ENCODE measurements at regions of chr11 and their contacts with region 1.

Region 1: DNA sequence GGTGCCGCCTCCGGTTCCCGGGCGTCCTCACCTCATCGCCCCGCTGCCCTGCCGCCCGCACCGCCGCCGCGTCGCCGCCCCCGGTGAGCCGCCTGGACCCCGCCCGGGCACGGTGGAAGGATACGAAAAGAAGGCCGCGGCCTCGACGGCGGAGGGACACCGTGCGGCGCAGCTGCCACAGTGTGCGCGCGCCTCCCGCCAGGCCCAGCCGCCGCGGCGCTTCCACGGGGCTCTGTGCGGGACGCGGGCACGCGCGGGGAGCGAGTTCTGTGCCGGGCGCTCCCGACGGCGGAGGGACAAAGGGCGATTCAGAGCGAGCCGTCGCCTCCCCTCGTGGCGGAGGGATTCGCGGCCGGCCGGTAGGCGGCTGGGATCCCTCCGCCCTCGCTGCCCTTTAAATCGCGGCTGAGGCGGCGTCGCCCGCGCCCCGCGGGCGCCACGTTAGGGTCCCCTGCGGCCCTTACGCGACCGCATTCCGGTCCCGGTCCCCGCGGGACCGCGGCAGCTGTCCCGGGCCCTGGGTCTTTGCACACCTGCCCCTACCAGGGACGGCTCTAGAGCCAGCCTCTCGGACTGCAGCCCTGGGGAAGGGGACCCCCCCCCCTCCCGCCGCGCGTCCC is 569 bp upstream of the KMT5B start:
- DNase-seq: peak; percentile 59 to 90 (median 80)
- H3K4me3 ChIP-seq: peak overlapping the region; percentile 59 to 95 (median 86)
- H3K27ac ChIP-seq: peak overlapping the region; percentile 89 to 100 (median 98)
- H3K27me3 ChIP-seq: no peaks in the 10 kb centered on the region
- CTCF ChIP-seq: peak in 27 of 56 donors; percentile 7 to 57 (median 27)

Region 2: GRCh38 chr11:68121067-68121899 is 92.4 kb before region 1 on chr11 and contains the start of gene CHKA:
- intact Hi-C with region 1: loop called (anchors 1 to 2 kb)
- DNase-seq: peak; percentile 86 to 98 (median 92)
- H3K4me3 ChIP-seq: peak within 1 kb of the TSS; percentile 60 to 94 (median 78)
- H3K27ac ChIP-seq: peak within 1 kb of the TSS; percentile 92 to 100 (median 98)
- H3K27me3 ChIP-seq: no peaks in the 10 kb centered on the region
- CTCF ChIP-seq: peak in 19 of 56 donors; percentile 5 to 47 (median 27)
- total RNA-seq, gene CHKA: 56.6 to 150 (median 86.1) TPM

Region 3: DNA sequence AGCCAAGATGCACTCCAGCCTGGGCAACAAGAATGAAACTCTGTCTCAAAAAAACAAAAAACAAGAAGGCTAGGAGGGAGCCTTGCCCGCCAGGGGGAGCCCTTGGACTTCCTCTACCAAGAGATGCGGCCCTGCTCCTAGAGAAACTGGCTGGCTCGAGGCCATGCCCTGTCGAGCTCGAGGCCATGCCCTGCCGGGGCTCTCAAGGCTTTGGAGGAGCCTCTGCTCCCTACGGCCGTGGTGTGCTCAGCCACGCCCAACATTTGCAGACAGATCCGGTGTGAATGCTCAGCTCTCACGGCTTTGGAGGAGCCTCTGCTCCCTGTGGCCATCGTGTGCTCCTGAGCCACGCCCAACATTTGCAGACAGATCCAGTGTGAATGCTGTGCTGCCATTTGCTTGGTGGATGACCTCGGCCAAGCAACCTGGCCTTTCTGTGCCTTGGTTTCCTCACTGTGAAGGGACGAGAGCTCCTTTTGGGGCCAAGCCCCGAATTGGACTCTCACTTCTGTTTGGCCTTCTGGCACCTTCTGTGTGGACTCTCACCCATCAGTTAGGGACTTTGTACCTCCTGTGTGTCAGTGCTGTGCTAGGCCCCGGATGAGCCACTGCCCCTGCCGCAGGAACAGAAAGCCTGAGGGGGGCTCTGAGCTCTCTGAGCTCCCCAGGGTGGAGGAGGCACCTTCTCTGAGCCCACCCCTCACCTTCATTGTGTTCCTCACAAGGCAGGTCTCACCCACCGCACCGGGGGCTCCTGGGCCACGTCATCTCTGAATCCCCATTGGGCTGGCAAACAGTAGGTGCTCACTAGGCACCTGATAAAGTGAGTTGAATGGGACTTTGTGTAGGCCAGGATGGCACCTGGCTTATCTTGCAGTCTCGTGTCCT is 44.1 kb after region 1 on chr11:
- intact Hi-C with region 1: loop called in 1 of 2 experiments (anchors 5 kb)
- DNase-seq: peak; percentile 91 to 99 (median 97)
- H3K4me3 ChIP-seq: peak overlapping the region in 33 of 59 donors; percentile 2 to 57 (median 23)
- H3K27ac ChIP-seq: peak overlapping the region in 50 of 59 donors; percentile 0 to 85 (median 56)
- H3K27me3 ChIP-seq: no peaks in the 10 kb centered on the region
- CTCF ChIP-seq: peak; percentile 81 to 99 (median 93)

Region 4: DNA sequence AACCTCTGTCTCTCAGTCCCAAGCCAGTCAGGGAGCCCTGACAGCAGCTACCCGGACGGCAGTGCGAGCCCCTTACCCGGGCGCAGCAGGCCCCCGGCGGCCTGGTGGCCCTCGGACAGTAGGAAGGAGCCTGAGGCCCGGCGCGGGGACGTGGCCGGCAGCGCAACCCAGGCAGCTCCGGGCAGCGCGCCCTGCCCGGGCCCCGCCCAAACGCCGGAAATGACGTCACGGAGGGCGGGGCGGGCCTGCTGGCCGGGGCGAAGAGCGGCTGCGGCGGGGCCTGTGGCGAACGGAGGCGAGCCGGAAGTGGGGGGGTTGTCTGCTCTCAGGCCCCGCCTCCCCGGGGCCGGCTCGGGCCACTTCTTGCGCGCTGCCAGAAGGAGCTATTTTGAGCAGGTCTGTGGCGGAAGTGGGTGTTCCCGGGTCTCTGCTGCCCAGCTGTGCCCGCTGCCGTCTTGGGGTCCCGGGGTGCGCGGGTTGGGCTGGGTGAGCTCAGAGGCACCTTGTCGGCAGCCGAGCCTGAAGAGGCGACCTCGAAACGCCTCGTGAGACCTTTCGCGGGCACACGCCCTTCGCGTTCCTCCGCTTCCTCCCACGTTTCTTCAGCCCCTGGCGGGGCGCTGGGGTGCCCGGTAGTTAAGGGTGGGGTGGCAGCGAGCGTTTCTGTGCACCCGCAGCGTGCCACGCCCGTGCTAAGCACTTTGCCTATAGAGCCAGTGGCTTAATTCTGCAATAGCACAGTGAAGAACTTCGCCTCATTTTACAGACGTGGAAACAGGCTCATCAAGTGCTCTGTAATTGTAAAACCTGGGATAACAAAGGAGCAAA is 58.3 kb after region 1 on chr11 and contains the start of gene C11orf24:
- intact Hi-C with region 1: loop called (anchors 1 to 2 kb)
- DNase-seq: peak; percentile 88 to 98 (median 94)
- H3K4me3 ChIP-seq: peak within 1 kb of the TSS; percentile 67 to 98 (median 87)
- H3K27ac ChIP-seq: peak within 1 kb of the TSS; percentile 46 to 98 (median 93)
- H3K27me3 ChIP-seq: no peaks in the 10 kb centered on the region
- CTCF ChIP-seq: peak in 25 of 56 donors; percentile 4 to 54 (median 27)
- total RNA-seq, gene C11orf24: 12.6 to 56.0 (median 23.3) TPM

Region 5: DNA sequence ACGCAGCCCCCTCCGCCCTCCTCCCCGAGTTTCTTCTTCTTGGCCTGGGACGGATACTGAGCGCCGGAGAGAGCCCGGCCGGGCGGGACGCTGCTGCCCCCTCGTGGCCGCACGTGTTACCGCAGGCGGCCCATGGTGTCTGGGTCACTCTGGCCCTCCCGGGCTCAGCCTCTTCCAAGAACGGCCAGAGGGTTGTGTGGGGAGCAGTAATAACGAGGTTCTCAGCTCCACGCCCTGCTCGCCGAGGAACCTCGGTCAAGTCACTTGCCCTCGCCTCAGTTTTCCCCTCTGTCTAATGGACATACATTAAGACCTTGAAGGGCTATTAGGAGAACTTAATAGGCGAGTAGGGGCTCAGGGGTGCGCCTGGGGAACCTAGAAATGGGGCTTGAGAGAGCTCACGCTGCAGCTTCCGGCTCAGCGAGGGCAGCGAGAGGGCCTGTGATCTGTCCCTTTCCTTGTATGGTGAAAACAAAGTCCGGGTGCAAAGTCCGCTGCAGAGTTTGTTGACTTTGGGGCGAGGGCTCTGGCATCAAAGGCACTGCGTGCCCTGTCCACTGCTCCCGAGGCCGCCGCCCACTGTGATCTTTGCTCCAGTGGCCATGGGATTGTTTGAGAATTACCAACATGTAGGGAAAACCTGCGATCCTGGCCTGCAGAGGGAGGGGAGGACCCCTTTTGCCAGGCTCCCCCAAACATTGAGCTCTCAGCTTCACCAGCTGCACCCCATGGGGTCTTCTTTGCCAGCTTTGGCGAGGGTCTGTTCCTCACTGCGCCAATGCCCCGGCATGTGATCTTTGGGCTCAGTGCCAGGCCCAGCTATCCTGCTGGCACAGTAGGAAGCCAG is 84.4 kb after region 1 on chr11:
- intact Hi-C with region 1: loop called (anchors 5 kb)
- DNase-seq: peak; percentile 58 to 89 (median 65)
- H3K4me3 ChIP-seq: peak overlapping the region in 36 of 59 donors; percentile 5 to 51 (median 28)
- H3K27ac ChIP-seq: peak overlapping the region in 1 of 59 donors; percentile 13
- H3K27me3 ChIP-seq: no peaks in the 10 kb centered on the region
- CTCF ChIP-seq: peak; percentile 85 to 99 (median 97)

Region 6: DNA sequence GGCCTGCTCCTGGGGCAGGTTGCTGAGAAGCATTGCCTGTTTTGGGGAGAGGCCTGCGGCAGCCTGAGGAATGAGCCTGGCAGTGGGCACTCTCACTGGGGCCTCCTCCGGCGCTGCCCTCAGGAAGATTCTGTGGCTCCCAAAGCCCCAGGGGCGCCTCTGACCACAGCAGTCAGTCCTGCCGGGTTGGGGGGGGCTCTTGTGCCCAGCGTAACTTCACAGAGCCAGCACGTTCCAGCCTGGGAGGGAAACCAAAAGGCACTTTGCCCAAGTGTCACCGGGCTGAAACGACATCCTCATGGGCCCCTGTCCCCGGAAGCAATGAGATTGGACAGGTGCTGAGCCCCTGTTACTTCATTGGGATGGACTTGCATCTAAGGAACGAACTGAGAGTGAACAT is 94.4 kb after region 1 on chr11:
- intact Hi-C with region 1: no loop called
- DNase-seq: no peak
- H3K4me3 ChIP-seq: no peak overlapping the region
- H3K27ac ChIP-seq: peak overlapping the region in 2 of 59 donors; percentile 5 to 8
- H3K27me3 ChIP-seq: peaks cover 0 to under 1% (median 0%) of the 10 kb centered on the region in 45 donors
- CTCF ChIP-seq: no peak

Region 7: DNA sequence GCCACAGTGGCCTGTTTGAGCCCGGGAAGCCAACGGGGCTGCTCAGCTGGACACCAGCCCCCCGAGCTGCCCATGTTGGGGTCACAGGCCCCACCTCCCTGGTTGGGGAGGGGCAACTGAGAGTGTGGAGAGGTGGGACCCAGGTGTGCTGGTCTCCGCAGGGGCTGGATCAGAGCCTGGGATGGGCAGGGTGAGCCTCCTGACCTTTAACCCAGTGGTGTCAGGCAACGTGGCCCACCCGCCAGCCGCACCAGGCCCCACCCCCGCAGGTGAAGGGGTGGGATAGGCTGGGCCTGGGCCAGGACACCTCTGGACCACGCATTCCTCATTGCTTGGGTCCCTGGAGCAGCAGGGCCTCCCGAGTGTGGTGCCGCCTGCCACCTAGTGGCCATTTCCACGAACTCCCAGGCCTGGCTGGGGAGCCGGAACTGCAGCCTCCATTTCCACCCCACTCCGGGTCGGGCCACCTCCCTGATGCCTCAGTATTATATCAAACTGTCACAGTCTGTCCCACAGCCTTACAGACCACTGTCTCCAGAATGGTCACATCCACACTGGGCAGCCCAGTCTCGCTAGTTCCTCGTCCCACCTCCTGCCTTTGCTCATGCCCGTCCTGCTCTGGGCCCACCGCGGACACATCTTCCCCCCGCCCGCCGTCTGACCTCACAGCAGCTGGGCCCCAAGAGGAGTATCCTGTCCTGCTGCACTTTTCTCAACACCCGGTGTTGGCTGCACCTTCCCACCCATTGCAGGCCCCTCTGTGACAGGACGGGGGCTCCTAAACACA is 233.5 kb after region 1 on chr11:
- intact Hi-C with region 1: loop called in 1 of 2 experiments (anchors 5 kb)
- DNase-seq: peak; percentile 65 to 88 (median 74)
- H3K4me3 ChIP-seq: no peak overlapping the region
- H3K27ac ChIP-seq: no peak overlapping the region
- H3K27me3 ChIP-seq: no peaks in the 10 kb centered on the region
- CTCF ChIP-seq: peak; percentile 72 to 98 (median 93)

Region 8: GRCh38 chr11:68459886-68460740 is 246.4 kb after region 1 on chr11:
- intact Hi-C with region 1: loop called in 1 of 2 experiments (anchors 5 kb)
- DNase-seq: peak; percentile 91 to 99 (median 98)
- H3K4me3 ChIP-seq: peak overlapping the region; percentile 55 to 96 (median 86)
- H3K27ac ChIP-seq: peak overlapping the region; percentile 80 to 99 (median 95)
- H3K27me3 ChIP-seq: no peaks in the 10 kb centered on the region
- CTCF ChIP-seq: peak in 7 of 56 donors; percentile 1 to 43 (median 15)

Measured in dorsolateral prefrontal cortex (tissue), 120 donors.